Thyroid gland (tissue), 4 donors: ENCODE measurements at regions of chr1 and their contacts with region 1.

Region 1: DNA sequence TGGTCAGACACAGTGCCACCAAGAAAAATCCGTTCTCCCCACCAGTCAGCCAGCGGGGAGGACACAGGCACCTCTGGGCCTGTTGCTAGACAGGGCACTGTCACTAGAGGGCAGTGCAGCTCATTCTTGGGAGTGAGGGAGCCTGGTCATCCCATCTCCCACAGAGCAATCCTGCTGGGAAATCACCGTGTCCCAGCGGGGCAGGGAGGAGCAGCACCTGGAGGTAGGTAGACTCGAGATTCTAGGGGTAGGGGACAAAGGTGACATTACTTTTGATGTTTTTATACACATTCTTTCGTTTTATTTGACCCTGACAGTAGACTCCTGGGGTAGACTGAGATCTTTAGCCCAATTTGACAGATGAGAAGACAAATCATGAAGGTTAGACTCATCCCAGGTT is 6.7 kb upstream of the CAMK1G start:
- DNase-seq: peak; percentile 77 to 85
- H3K4me3 ChIP-seq: no peak overlapping the region
- H3K27ac ChIP-seq: no peak overlapping the region
- H3K4me1 ChIP-seq: no peaks in the 10 kb centered on the region
- H3K27me3 ChIP-seq: no peaks in the 10 kb centered on the region
- CTCF ChIP-seq: peak; percentile 85 to 96 (median 89)
- POLR2A ChIP-seq: no peak

Region 2: GRCh38 chr1:209485167-209485566 is 91.6 kb before region 1 on chr1:
- intact Hi-C with region 1: no loop called
- DNase-seq: peak; percentile 68 to 70
- H3K4me3 ChIP-seq: no peak overlapping the region
- H3K27ac ChIP-seq: no peak overlapping the region
- H3K4me1 ChIP-seq: no peaks in the 10 kb centered on the region
- H3K27me3 ChIP-seq: no peaks in the 10 kb centered on the region
- CTCF ChIP-seq: no peak
- POLR2A ChIP-seq: no peak

Region 3: GRCh38 chr1:209627732-209628196 is 51.0 kb after region 1 on chr1:
- intact Hi-C with region 1: loop called (anchors 5 kb)
- DNase-seq: peak; percentile 75 to 82
- H3K4me3 ChIP-seq: no peak overlapping the region
- H3K27ac ChIP-seq: no peak overlapping the region
- H3K4me1 ChIP-seq: peaks cover 13 to 25% of the 10 kb centered on the region in 2 donors
- H3K27me3 ChIP-seq: no peaks in the 10 kb centered on the region
- CTCF ChIP-seq: peak; percentile 84 to 97 (median 88)
- POLR2A ChIP-seq: no peak

Region 4: GRCh38 chr1:209692745-209693504 is 116.1 kb after region 1 on chr1:
- intact Hi-C with region 1: loop called (anchors 5 kb)
- DNase-seq: peak; percentile 61 to 76
- H3K4me3 ChIP-seq: no peak overlapping the region
- H3K27ac ChIP-seq: no peak overlapping the region
- H3K4me1 ChIP-seq: no peaks in the 10 kb centered on the region
- H3K27me3 ChIP-seq: no peaks in the 10 kb centered on the region
- CTCF ChIP-seq: peak; percentile 62 to 89 (median 79)
- POLR2A ChIP-seq: no peak